ENCODE measurements at regions of chr20 and their contacts with region 1.

Region 1: DNA sequence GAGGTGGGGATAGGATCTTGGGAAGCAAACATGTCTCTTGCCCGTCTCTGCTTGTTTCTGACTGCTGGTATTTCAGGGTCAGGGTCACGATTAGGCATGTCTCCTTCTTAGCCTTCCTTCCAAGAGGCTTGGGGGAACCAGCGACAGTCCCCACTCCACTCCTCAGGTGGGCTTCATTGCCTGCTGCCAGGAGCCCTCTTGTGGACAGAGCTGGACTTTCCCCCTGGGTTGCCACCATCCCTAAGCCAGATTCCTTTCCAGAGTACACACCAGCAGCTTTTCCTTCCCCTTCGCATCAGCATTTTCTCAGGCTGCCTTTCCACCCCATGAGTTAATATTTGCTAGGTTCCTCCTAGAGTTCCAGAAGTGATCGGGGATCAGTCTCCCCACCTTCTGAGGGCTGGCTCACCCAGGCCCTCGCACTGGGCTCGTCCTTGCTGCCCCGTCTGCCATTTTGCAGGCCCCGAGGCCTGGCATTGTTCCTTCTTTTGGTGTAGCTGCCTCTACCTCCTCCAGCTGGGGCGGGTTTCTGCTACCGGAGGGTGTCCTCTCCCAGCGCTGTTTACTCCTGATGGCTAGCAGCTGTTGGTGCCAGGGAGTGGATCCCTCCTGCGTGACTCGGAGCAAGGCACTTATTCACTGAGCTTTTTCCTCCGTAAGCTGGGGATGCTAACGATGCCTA is 8.8 kb upstream of the C20orf144 start:
- DNase-seq: peak in 1 of 2 donors; percentile 60
- ATAC-seq: peak; percentile 48 to 75 (median 63)
- H3K4me3 ChIP-seq: peak overlapping the region in 5 of 10 donors; percentile 1 to 38 (median 21)
- H3K27ac ChIP-seq: peak overlapping the region in 1 of 10 donors; percentile 6
- H3K4me1 ChIP-seq: peaks cover 4 to 32% (median 23%) of the 10 kb centered on the region in 9 donors
- H3K27me3 ChIP-seq: no peaks in the 10 kb centered on the region
- CTCF ChIP-seq: peak; percentile 51 to 80 (median 74)

Region 2: DNA sequence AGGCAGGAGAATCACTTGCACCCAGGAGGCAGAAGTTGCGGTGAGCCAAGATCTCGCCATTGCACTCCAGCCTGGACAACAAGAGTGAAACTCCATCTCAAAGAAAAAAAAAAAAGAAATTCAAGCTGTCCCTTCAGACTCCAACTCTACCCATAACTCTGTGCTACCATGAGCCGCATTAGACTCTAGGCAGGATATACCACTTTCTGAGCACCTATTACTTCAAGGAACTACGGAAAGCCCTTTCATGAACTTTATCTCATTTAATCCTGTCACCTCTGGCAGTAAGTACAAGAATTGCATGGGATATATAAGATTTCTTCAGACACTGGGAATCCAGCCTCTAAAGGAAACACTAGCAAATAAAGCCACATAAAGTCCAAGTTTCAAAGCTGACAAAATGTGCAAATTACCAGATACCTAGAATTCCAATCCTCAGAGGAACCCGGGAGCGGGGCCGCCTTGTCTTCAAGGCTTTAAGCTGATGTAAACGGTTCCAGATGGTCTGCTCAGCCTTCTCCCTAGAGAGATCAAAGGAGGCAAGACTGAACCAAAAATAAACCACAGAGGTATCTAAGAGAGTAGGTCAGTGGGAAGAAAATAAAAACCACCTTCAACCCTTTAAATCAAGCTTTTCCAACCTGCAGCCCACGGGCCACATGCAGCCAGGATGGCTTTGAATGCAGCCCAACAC is 261.5 kb before region 1 on chr20:
- intact Hi-C with region 1: loop called in 2 of 10 experiments (anchors 10 kb)
- DNase-seq: no peak
- ATAC-seq: peak in 1 of 8 donors; percentile 25
- H3K4me3 ChIP-seq: no peak overlapping the region
- H3K27ac ChIP-seq: no peak overlapping the region
- H3K4me1 ChIP-seq: peaks cover 0 to 7% (median 0%) of the 10 kb centered on the region in 9 donors
- H3K27me3 ChIP-seq: no peaks in the 10 kb centered on the region
- CTCF ChIP-seq: no peak

Region 3: DNA sequence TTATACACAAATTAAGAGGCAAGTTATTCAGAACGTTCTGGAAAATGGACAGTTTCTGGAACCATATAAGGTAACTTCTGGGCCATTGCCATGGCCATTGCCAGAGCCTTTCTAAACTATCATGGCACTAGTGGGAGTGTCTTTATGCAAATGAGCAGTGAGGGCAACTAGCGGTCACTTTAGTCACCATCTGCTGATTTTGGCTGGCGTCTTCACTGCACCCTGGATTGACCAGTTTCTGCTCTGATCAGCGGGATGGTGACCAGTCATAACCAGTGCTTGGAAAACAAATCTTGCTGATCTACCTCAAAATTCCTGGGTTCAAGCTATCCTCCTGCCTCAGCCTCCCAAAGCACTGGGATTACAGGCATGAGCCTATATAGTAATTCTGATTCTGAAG is 202.5 kb before region 1 on chr20:
- intact Hi-C with region 1: loop called in 6 of 10 experiments (anchors 2 to 10 kb)
- DNase-seq: no peak
- ATAC-seq: no peak
- H3K4me3 ChIP-seq: no peak overlapping the region
- H3K27ac ChIP-seq: no peak overlapping the region
- H3K4me1 ChIP-seq: no peaks in the 10 kb centered on the region
- H3K27me3 ChIP-seq: no peaks in the 10 kb centered on the region
- CTCF ChIP-seq: no peak

Region 4: DNA sequence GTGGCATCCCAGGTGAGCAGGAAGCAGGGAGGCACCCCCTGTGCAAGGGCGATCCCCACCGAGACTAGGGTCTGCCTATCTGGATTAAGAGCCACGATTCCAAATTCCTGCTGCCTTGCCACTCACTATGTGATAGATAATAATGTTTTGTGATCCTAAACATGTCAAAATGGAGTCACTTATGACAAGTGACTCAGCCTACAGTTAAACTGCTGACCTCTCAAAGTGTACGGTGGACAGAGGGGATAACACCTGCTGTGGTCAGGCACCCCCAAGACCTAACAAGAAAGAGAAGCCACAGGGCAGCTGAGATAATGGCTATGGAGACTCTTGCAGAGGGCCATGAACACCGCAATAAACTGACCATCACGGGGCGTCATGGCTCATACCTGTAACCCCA is 193.8 kb before region 1 on chr20:
- intact Hi-C with region 1: loop called in 8 of 10 experiments (anchors 1 to 10 kb)
- DNase-seq: no peak
- ATAC-seq: no peak
- H3K4me3 ChIP-seq: no peak overlapping the region
- H3K27ac ChIP-seq: no peak overlapping the region
- H3K4me1 ChIP-seq: peaks cover 0 to 16% (median 0%) of the 10 kb centered on the region in 9 donors
- H3K27me3 ChIP-seq: no peaks in the 10 kb centered on the region
- CTCF ChIP-seq: no peak

Region 5: GRCh38 chr20:33465481-33466302 is 187.7 kb before region 1 on chr20:
- intact Hi-C with region 1: loop called in 2 of 10 experiments (anchors 5 kb)
- DNase-seq: no peak
- ATAC-seq: peak in 1 of 8 donors; percentile 27
- H3K4me3 ChIP-seq: no peak overlapping the region
- H3K27ac ChIP-seq: no peak overlapping the region
- H3K4me1 ChIP-seq: peaks cover 0 to 16% (median 0%) of the 10 kb centered on the region in 9 donors
- H3K27me3 ChIP-seq: no peaks in the 10 kb centered on the region
- CTCF ChIP-seq: no peak

Measured in heart right ventricle (tissue), 16 donors.